ENCODE measurements at regions of chr5 and their contacts with region 1.

Region 1: GRCh38 chr5:132238169-132238744 is 10.6 kb upstream of the P4HA2 start:
- DNase-seq: peak in 5 of 6 donors; percentile 61 to 86 (median 78)
- ATAC-seq: peak; percentile 83 to 96 (median 92)
- H3K4me3 ChIP-seq: no peak overlapping the region
- H3K27ac ChIP-seq: no peak overlapping the region
- H3K4me1 ChIP-seq: no peaks in the 10 kb centered on the region
- H3K27me3 ChIP-seq: no peaks in the 10 kb centered on the region
- CTCF ChIP-seq: peak; percentile 48 to 80 (median 71)

Region 2: GRCh38 chr5:132283423-132284043 is 45.3 kb after region 1 on chr5:
- intact Hi-C with region 1: loop called in 1 of 3 experiments (anchors 10 kb)
- DNase-seq: peak in 1 of 6 donors; percentile 65
- ATAC-seq: peak; percentile 69 to 92 (median 76)
- H3K4me3 ChIP-seq: no peak overlapping the region
- H3K27ac ChIP-seq: no peak overlapping the region
- H3K4me1 ChIP-seq: no peaks in the 10 kb centered on the region
- H3K27me3 ChIP-seq: no peaks in the 10 kb centered on the region
- CTCF ChIP-seq: peak; percentile 13 to 60 (median 32)

Region 3: GRCh38 chr5:133273661-133274596 is 1035.7 kb after region 1 on chr5:
- intact Hi-C with region 1: no loop called
- DNase-seq: no peak
- ATAC-seq: peak in 1 of 4 donors; percentile 41
- H3K4me3 ChIP-seq: no peak overlapping the region
- H3K27ac ChIP-seq: no peak overlapping the region
- H3K4me1 ChIP-seq: no peaks in the 10 kb centered on the region
- H3K27me3 ChIP-seq: no peaks in the 10 kb centered on the region
- CTCF ChIP-seq: no peak